Activated naive CD4-positive, alpha-beta T cell treated with anti-CD3 and anti-CD28 coated beads for 36 hours (primary cell): ENCODE measurements at regions of chr11 and their contacts with region 1.

Region 1: DNA sequence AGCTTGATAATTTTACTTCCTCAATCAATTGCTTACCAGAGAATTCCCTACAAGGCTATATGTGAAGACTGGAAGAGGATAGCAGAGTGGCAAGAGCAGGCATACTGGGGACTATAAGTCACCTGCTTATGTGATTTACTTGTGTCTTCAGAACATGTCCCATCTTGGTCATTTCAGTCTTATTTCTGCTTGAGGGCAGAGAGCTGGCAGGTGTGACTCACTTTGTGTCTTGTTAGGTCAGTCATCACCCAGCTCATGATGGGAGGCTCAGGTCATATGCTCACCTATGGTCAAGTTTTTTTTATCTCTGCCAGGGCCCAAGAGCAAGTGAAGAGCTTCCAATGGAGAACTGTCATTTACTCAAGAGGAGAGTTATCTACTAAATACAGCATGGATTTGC is 6.2 kb downstream of the SRSF8 start:
- DNase-seq: no peak
- H3K4me3 Mint-ChIP-seq: no peak overlapping the region
- H3K27ac Mint-ChIP-seq: no peak overlapping the region
- H3K4me1 Mint-ChIP-seq: peaks cover 23% of the 10 kb centered on the region
- H3K27me3 Mint-ChIP-seq: no peaks in the 10 kb centered on the region

Region 2: DNA sequence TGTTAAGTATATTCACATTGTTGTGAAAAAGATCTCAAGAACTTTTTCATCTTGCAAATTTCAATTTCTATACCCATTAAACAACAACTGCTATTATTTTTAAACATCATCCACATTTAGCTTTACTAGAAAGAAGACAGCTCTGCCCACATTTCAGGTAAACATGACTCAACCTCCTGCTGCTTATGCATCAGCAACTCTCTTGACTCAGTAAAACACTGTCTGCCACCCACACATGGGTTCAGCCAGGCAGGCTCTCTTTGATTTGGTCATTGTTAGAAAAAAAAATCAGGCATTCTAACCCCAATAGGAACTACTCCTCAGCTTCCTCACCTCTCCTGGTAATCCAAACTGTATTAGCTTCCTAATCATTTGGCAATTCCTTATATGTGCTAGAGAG is 11.6 kb after region 1 on chr11:
- CTCF ChIA-PET with region 1: interaction called, 132 read pairs
- intact Hi-C with region 1: loop called (anchors 1 kb)
- DNase-seq: peak; percentile 84
- H3K4me3 Mint-ChIP-seq: no peak overlapping the region
- H3K27ac Mint-ChIP-seq: peak overlapping the region; percentile 69
- H3K4me1 Mint-ChIP-seq: peaks cover 42% of the 10 kb centered on the region
- H3K27me3 Mint-ChIP-seq: no peaks in the 10 kb centered on the region

Region 3: GRCh38 chr11:95138448-95138847 is 65.5 kb after region 1 on chr11:
- CTCF ChIA-PET with region 1: interaction called, 42 read pairs
- intact Hi-C with region 1: loop called (anchors 1 kb)
- DNase-seq: no peak
- H3K4me3 Mint-ChIP-seq: no peak overlapping the region
- H3K27ac Mint-ChIP-seq: no peak overlapping the region
- H3K4me1 Mint-ChIP-seq: peaks cover 7% of the 10 kb centered on the region
- H3K27me3 Mint-ChIP-seq: peaks cover 9% of the 10 kb centered on the region